Pancreas (tissue), 10 donors: ENCODE measurements at regions of chr9 and their contacts with region 1.

Region 1: DNA sequence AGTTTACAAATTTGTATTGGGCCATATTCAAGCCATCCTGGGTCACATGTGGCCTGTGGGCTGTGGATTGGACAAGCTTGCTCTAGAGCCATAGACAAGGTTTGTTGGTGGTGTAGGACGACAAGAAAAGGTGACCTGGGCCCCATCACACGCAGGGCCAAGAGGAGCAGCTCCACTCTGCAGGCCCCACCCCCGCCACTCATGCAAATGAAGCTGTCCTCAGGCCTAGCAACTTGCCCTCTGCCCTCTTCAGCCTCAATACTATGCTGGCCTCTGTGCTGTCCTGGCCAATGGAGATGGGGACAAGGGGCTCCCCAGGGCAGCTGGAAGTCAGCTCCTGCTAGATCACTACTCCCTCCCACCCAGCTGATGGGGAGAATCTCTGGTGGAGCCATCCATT is 55.2 kb upstream of the TMEM252 start:
- DNase-seq: no peak
- ATAC-seq: no peak
- H3K4me3 ChIP-seq: no peak overlapping the region
- H3K27ac ChIP-seq: no peak overlapping the region
- H3K4me1 ChIP-seq: no peaks in the 10 kb centered on the region
- H3K27me3 ChIP-seq: no peaks in the 10 kb centered on the region
- CTCF ChIP-seq: no peak

Region 2: GRCh38 chr9:68685770-68686169 is 89.9 kb after region 1 on chr9:
- intact Hi-C with region 1: loop called in 1 of 3 experiments (anchors 10 kb)
- DNase-seq: peak in 4 of 6 donors; percentile 43 to 60 (median 49)
- ATAC-seq: peak; percentile 74 to 89 (median 81)
- H3K4me3 ChIP-seq: no peak overlapping the region
- H3K27ac ChIP-seq: no peak overlapping the region
- H3K4me1 ChIP-seq: no peaks in the 10 kb centered on the region
- H3K27me3 ChIP-seq: no peaks in the 10 kb centered on the region
- CTCF ChIP-seq: peak in 3 of 4 donors; percentile 22 to 33 (median 28)